ENCODE measurements at regions of chr1 and their contacts with region 1.

Region 1: GRCh38 chr1:202255343-202255742 is 61.7 kb downstream of the LGR6 start:
- DNase-seq: no peak
- H3K4me3 ChIP-seq: no peak overlapping the region
- H3K27me3 ChIP-seq: peaks cover 14% of the 10 kb centered on the region
- CTCF ChIP-seq: no peak

Region 2: GRCh38 chr1:202274611-202275010 is 19.3 kb after region 1 on chr1:
- CTCF ChIA-PET with region 1: interaction called, 11 read pairs
- POLR2A ChIA-PET with region 1: no interaction called
- DNase-seq: no peak
- H3K4me3 ChIP-seq: no peak overlapping the region
- H3K27me3 ChIP-seq: peaks cover 52% of the 10 kb centered on the region
- CTCF ChIP-seq: peak; percentile 51

Region 3: GRCh38 chr1:202728951-202729350 is 473.6 kb after region 1 on chr1:
- CTCF ChIA-PET with region 1: no interaction called
- POLR2A ChIA-PET with region 1: no interaction called
- DNase-seq: no peak
- H3K4me3 ChIP-seq: no peak overlapping the region
- H3K27me3 ChIP-seq: no peaks in the 10 kb centered on the region
- CTCF ChIP-seq: no peak